Right lobe of liver (tissue), 6 donors: ENCODE measurements at regions of chr14 and their contacts with region 1.

Region 1: GRCh38 chr14:50599700-50600444 is 39.9 kb downstream of the ATL1 start:
- DNase-seq: no peak
- ATAC-seq: peak; percentile 86 to 88 (median 87)
- H3K4me3 ChIP-seq: peak overlapping the region in 2 of 3 donors; percentile 7 to 36
- H3K27ac ChIP-seq: no peak overlapping the region
- H3K4me1 ChIP-seq: peaks cover 0 to 4% (median 0%) of the 10 kb centered on the region in 4 donors
- H3K27me3 ChIP-seq: no peaks in the 10 kb centered on the region
- CTCF ChIP-seq: peak; percentile 43 to 61 (median 60)
- POLR2A ChIP-seq: no peak

Region 2: GRCh38 chr14:50773632-50774541 is 174.0 kb after region 1 on chr14:
- intact Hi-C with region 1: loop called in 1 of 2 experiments (anchors 10 kb)
- DNase-seq: no peak
- ATAC-seq: peak; percentile 82 to 87 (median 84)
- H3K4me3 ChIP-seq: no peak overlapping the region
- H3K27ac ChIP-seq: no peak overlapping the region
- H3K4me1 ChIP-seq: peaks cover 0 to 2% (median 0%) of the 10 kb centered on the region in 4 donors
- H3K27me3 ChIP-seq: no peaks in the 10 kb centered on the region
- CTCF ChIP-seq: peak; percentile 52 to 80 (median 73)
- POLR2A ChIP-seq: no peak